ENCODE measurements at regions of chr3 and their contacts with region 1.

Region 1: DNA sequence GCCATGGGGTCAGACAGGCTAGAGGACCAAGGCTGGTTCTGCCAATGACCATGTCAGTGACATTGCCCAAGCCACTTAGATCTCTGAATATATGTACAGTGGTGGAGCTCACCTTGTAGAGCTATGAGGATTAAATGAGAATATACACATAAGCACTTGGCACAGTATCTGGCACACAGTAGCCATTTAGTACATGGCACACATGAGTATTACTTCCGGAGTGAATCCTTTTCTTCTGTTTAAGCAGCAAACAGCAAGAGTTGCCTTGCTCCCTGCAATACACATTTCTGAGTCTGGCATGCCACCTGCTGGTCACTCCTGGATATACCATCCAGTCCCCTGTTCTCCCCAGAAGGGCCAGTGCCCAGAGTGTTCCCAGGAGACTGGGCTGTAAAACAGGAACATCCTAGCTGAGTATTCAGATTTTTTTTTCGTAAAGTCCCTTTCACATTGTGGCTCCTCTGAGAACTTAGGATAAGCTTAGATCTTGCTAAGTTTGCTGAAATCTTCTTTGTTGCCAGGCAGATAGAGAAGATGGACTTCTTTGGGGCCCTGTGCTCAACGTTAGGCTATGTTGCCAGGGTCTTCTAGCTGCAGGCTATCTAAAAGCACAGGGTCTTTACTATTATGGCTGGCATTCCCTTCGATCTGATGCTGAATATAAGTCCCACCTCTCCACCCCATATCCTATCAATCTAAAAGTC is 203.4 kb downstream of the ADAMTS9 start:
- DNase-seq: peak; percentile 78
- ATAC-seq: peak; percentile 86
- H3K4me3 Mint-ChIP-seq: no peak overlapping the region
- H3K27ac Mint-ChIP-seq: no peak overlapping the region
- H3K4me1 Mint-ChIP-seq: peaks cover 5% of the 10 kb centered on the region
- H3K27me3 Mint-ChIP-seq: peaks cover 6% of the 10 kb centered on the region

Region 2: DNA sequence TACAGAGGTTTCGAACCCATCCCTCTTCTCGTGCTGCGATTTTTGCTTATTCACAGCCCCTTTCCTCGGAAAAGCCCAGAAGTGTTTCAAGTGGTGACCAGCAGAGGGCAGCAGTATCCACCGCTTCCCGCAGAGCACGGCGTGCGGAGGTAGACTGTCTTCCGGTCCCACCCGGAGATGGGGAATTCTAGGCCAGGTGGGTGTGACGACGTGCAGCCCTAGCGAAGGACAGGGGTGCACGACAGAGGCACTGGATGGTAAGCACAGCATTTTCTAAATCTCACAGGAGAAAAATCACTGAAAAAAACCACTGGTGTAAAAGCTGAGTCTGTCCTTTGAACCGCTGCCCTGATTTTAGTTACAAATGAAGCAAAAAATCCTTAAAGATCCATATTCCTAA is 453.7 kb before region 1 on chr3:
- CTCF ChIA-PET with region 1: interaction called, 33 read pairs
- POLR2A ChIA-PET with region 1: no interaction called
- DNase-seq: peak; percentile 78
- ATAC-seq: peak; percentile 97
- H3K4me3 Mint-ChIP-seq: peak overlapping the region; percentile 72
- H3K27ac Mint-ChIP-seq: peak overlapping the region; percentile 64
- H3K4me1 Mint-ChIP-seq: peaks cover 6% of the 10 kb centered on the region
- H3K27me3 Mint-ChIP-seq: peaks cover 30% of the 10 kb centered on the region